Naive thymus-derived CD8-positive, alpha-beta T cell (primary cell): ENCODE measurements at regions of chr17 and their contacts with region 1.

Region 1: DNA sequence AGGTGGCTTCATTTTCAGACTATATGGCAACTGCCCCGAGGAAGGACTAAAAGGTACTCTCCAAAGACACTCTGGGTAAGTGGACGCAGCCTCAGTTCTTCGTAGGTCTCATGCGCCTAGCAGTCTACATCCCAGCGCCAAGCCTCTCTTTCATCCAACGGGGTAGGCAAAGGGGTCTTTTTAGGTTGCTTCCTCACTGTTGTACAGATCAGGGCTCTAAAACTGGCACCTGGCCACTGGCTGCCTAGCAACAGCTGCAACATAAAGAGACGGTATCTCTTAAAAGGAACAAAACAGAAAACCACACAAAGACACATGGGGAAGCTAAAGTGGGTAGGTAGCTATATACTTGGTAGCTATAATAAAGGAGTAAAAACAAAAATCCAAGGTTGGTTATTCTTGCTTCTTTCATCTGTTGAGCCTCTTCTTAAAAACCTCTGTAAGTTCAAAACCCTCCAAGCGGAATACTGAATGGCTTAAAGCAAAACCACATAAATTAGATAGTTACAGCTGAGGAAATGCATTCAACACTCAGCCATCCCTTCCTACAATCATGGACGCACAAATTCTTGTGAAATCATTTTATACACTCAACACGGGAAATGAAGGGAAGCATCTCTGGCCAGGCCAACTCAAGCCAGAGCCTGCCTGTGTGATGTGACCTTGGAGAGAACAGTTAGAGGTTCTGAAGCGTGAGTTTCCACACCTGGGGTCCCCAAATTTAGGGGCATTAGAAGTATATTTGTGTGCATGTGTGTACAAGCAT is 22.7 kb downstream of the CYTH1 start:
- DNase-seq: peak; percentile 68 to 97 (median 90)
- ATAC-seq: peak; percentile 75 to 87
- H3K4me3 Mint-ChIP-seq: peak overlapping the region; percentile 61 to 88 (median 79)
- H3K27ac Mint-ChIP-seq: peak overlapping the region; percentile 90 to 99 (median 98)
- H3K4me1 Mint-ChIP-seq: peaks cover 26 to 90% (median 76%) of the 10 kb centered on the region in 4 donors
- H3K27me3 Mint-ChIP-seq: no peaks in the 10 kb centered on the region

Region 2: DNA sequence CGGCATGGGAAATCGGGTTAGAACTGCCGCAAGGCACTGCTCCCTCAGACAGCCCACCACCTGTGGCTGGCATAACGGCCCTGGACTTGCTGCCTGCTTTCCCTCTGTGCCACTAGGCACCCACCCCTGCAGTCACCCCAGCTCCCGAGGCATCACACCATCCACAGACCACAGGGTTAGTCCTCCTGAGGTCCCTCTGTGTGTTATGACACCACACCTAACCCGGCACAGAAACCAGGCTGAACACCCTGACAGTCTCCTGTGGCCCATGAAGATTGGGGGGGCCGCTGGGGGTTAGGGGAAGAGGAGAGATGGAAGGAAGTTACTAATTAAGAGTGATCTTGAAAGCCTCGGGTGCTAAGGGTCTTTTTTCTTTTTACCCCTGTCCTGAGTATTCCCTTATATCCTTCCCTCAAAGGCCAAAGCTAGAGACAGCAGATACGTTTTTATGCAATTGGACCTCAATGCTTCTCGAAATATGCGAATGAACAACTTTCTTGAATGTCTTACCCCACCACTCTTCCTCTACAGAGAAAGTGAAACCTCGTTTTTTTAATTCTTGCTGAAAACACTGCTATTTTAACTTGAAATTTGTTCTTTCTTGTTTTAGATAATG is 15.7 kb after region 1 on chr17:
- POLR2A ChIA-PET with region 1: interaction called, 188 read pairs
- DNase-seq: peak in 9 of 10 donors; percentile 41 to 80 (median 63)
- ATAC-seq: peak; percentile 50 to 55
- H3K4me3 Mint-ChIP-seq: peak overlapping the region; percentile 84 to 98 (median 91)
- H3K27ac Mint-ChIP-seq: peak overlapping the region in 8 of 10 donors; percentile 94 to 99 (median 98)
- H3K4me1 Mint-ChIP-seq: peaks cover 29 to 79% (median 68%) of the 10 kb centered on the region in 4 donors
- H3K27me3 Mint-ChIP-seq: no peaks in the 10 kb centered on the region